Endothelial cell of umbilical vein (primary cell): ENCODE measurements at regions of chr15 and their contacts with region 1.

Region 1: GRCh38 chr15:69244798-69245197 is 53.9 kb upstream of the PAQR5 start:
- DNase-seq: no peak
- H3K4me3 ChIP-seq: no peak overlapping the region
- H3K27ac ChIP-seq: no peak overlapping the region
- H3K4me1 ChIP-seq: no peaks in the 10 kb centered on the region
- H3K27me3 ChIP-seq: no peaks in the 10 kb centered on the region
- CTCF ChIP-seq: no peak
- POLR2A ChIP-seq: no peak

Region 2: GRCh38 chr15:69225355-69226025 is 19.3 kb before region 1 on chr15:
- CTCF ChIA-PET with region 1: interaction called, 29 read pairs
- POLR2A ChIA-PET with region 1: no interaction called
- dilution Hi-C with region 1: no loop called
- intact Hi-C with region 1: no loop called
- DNase-seq: peak; percentile 62
- H3K4me3 ChIP-seq: no peak overlapping the region
- H3K27ac ChIP-seq: no peak overlapping the region
- H3K4me1 ChIP-seq: peaks cover 2% of the 10 kb centered on the region
- H3K27me3 ChIP-seq: no peaks in the 10 kb centered on the region
- CTCF ChIP-seq: peak; percentile 5 to 18
- POLR2A ChIP-seq: no peak